AG04450 (cell line): ENCODE measurements at regions of chr3 and their contacts with region 1.

Region 1: GRCh38 chr3:48088749-48089466 is 72.7 kb upstream of the MAP4 start:
- DNase-seq: peak; percentile 90
- H3K4me3 ChIP-seq: peak overlapping the region; percentile 88
- H3K27ac ChIP-seq: peak overlapping the region; percentile 98
- H3K27me3 ChIP-seq: no peaks in the 10 kb centered on the region
- CTCF ChIP-seq: no peak

Region 2: GRCh38 chr3:48047841-48048456 is 41.0 kb before region 1 on chr3:
- CTCF ChIA-PET with region 1: no interaction called
- POLR2A ChIA-PET with region 1: interaction called, 10 read pairs
- DNase-seq: no peak
- H3K4me3 ChIP-seq: no peak overlapping the region
- H3K27ac ChIP-seq: no peak overlapping the region
- H3K27me3 ChIP-seq: no peaks in the 10 kb centered on the region
- CTCF ChIP-seq: no peak

Region 3: DNA sequence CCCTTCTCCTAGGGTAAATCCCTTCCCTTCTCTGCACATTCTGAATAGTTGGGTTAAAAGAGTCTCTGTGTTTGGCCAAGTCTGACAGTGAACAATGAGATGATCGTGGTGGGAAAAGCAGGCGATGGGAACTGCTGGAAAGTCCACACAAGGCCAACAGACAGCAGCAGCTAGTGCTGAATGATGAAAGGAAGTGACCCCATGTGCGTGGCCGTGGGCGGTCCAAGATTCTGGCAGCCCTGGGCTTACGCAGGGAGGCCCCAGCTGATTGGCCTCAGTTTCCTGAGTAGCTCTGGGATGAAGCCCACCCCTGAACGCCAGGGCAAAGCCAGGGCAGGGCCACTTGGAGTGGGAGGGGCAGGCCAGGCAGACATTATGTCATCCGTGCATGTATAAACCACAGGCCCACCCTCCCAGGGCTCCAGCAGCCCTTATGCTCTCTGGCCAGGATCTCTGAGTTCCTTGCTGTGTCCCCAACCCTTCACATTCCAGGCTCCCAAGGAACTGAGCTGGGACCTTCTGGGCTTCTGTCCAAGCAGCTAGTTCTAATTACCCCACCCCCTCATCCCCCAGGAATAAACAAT is 41.5 kb after region 1 on chr3:
- CTCF ChIA-PET with region 1: interaction called, 3 read pairs
- POLR2A ChIA-PET with region 1: interaction called, 14 read pairs
- DNase-seq: peak; percentile 72
- H3K4me3 ChIP-seq: no peak overlapping the region
- H3K27ac ChIP-seq: peak overlapping the region; percentile 84
- H3K27me3 ChIP-seq: no peaks in the 10 kb centered on the region
- CTCF ChIP-seq: no peak